ENCODE measurements at regions of chr17 and their contacts with region 1.

Region 1: DNA sequence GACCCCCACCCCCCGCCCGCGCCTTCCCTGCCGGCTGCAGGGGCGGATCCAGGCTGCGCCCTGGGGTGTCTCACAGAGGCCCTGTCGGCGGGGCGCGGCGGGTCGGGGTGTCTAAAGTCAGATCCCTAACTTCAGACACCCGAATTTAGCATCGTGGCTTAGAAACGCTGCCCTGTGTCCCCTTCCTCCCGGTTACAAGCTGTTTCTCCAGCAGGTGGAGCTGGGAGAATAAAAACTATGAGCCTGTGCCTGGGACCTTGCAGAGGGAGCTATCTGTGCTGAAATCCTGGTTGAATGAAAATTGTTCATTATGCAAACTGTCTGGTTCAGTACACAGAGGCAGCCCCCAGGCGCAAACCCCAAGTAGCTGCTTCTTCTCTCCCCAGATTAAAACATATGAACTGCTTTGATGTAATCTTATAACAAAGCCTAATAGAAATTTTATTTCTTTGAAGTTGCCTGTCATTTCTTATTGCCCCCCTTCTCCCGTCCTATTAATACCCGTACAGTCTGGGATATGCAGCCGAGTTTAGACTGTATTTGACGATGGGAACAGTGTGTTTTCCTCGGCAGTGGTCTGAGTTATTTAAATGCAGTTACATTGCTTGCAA is 79.0 kb downstream of the RPA1 start:
- DNase-seq: peak; percentile 32
- H3K4me3 Mint-ChIP-seq: peak overlapping the region; percentile 50
- H3K27ac Mint-ChIP-seq: no peak overlapping the region
- H3K4me1 Mint-ChIP-seq: no peaks in the 10 kb centered on the region
- H3K27me3 Mint-ChIP-seq: peaks cover 61% of the 10 kb centered on the region

Region 2: DNA sequence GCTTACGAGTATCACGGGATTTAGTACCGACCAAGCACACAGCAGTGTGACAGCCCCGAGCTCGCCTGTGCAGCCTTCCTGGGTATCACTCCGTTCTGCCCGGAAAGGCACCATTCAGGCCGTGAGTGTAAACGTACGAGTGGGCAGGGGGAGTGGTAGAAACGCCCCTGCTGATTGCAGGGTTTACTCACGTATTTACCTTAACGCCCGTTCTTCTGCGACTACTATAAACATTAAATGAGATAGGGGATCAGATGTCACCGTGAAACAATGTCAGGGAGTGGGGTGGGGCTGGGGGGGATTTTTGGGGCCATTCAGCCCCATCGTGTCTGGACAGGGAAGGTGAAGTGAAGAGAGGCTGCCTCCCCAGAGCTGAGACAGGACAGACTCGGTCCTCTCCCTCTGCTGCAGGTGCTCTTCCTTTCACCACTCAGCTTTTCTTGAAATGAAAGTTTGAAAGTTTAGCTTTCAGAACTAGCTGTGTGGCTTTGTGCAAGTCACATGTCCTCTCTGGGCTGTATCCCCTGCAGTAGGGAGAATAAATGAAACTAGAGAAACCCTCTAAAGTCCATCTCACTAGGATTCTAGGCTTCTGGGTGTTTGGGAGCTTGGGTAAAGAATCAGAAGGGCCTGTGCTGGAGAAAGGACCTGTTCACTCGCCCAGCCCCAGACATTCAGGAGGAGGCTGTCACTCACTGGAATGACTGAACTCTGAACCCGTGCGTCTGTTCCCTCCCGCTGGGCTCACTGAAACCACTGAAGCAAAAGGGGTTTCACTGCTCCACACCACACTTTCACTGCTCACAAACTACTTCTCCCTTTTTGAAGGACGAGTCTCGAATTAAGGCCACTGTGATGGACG is 12.3 kb before region 1 on chr17:
- intact Hi-C with region 1: no loop called
- DNase-seq: no peak
- H3K4me3 Mint-ChIP-seq: no peak overlapping the region
- H3K27ac Mint-ChIP-seq: no peak overlapping the region
- H3K4me1 Mint-ChIP-seq: no peaks in the 10 kb centered on the region
- H3K27me3 Mint-ChIP-seq: no peaks in the 10 kb centered on the region

Region 3: GRCh38 chr17:2029911-2030778 is 121.3 kb after region 1 on chr17 and contains the start of gene DPH1:
- intact Hi-C with region 1: loop called (anchors 1 kb)
- DNase-seq: peak; percentile 85
- H3K4me3 Mint-ChIP-seq: peak within 1 kb of the TSS; percentile 92
- H3K27ac Mint-ChIP-seq: peak within 1 kb of the TSS; percentile 75
- H3K4me1 Mint-ChIP-seq: peaks cover 13% of the 10 kb centered on the region
- H3K27me3 Mint-ChIP-seq: peaks cover 35% of the 10 kb centered on the region
- total RNA-seq, gene DPH1: 49.4 and 61.3 TPM in 2 replicates

Region 4: GRCh38 chr17:2259769-2260536 is 351.1 kb after region 1 on chr17:
- intact Hi-C with region 1: loop called (anchors 10 kb)
- DNase-seq: peak; percentile 76
- H3K4me3 Mint-ChIP-seq: peak overlapping the region; percentile 73
- H3K27ac Mint-ChIP-seq: peak overlapping the region; percentile 97
- H3K4me1 Mint-ChIP-seq: peaks cover 67% of the 10 kb centered on the region
- H3K27me3 Mint-ChIP-seq: no peaks in the 10 kb centered on the region

Region 5: DNA sequence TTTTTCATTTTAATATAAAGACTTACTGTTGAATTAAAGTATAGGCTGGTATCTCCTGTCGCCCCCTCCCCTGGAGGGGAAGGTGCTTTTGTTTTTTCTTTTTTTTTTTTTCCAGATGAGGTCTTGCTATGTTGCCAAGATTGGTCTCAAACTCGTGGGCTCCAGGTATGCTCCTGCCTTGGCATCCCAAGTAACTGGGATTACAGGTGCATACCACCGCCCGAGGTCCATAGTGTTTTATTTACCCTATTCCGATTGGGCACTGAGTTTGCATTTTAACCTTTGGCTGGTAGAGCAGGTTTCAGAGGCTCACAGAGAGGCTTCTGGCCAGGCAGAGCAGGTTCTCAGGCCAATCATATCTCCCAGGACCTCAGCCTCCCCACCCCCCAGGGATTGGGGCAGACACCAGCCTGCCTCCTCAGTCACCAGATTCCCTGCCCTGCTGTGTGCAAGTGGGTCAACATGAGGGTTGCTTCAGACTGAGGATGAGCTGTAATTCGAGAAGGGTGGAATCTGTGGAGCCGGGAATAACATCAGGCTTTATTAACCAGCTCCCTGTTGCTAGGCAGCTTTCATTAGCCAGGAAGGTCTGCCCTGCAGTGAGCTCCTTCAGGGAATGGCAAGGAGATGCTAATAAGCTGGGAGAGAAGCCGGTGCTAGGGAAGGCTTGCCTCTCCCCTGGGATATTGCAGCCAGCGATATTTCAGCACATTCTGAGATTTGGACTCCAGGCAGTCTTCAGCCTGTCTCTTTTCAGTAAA is 438.9 kb after region 1 on chr17:
- intact Hi-C with region 1: loop called (anchors 10 kb)
- DNase-seq: no peak
- H3K4me3 Mint-ChIP-seq: no peak overlapping the region
- H3K27ac Mint-ChIP-seq: no peak overlapping the region
- H3K4me1 Mint-ChIP-seq: no peaks in the 10 kb centered on the region
- H3K27me3 Mint-ChIP-seq: peaks cover 2% of the 10 kb centered on the region